GM10248 (cell line): ENCODE measurements at regions of chr1 and their contacts with region 1.

Region 1: GRCh38 chr1:32247983-32248889 is 1.2 kb downstream of the FAM167B start:
- DNase-seq: peak; percentile 87
- CTCF ChIP-seq: peak; percentile 94

Region 2: DNA sequence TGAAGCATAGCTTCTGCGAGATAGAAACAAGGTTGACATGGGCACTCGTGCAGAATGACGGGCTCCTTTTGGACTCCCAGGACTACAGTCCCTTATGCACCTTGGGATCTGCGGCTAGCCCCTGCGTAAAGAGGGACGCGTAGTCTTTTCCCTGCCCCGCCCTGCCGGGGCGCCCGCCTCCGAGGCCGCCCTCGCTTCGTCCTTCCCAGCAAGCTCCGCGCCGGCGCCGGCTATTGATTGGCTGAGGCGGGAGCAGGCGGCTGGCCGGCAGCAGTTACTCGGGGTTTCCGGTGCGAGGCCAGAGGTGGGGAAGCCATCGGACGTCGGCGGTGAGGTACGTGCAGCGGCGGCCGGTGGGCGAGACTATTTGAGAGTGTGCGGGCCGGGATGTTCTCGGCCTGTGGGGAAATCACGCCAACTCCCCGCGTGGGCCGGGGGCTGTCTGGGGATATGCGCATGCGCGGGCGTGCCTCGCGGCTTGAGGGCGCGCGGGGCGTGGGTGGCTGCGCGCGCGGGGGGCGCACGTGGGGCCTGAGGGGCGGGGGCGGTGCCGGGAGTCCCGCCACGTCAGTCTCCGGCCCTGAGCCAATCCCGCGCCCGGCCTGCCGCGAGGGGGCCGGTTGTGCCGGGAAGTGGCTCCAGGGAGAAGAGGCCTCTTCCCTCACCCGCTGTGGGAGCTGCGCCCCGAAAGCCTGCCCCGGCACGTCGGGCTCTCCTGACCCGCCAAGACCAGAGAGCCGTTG is 68.6 kb before region 1 on chr1 and contains the start of gene TXLNA:
- CTCF ChIA-PET with region 1: interaction called, 11 read pairs
- POLR2A ChIA-PET with region 1: no interaction called
- DNase-seq: peak; percentile 98
- CTCF ChIP-seq: peak; percentile 11

Region 3: GRCh38 chr1:32228771-32229170 is 19.5 kb before region 1 on chr1:
- CTCF ChIA-PET with region 1: interaction called, 104 read pairs
- POLR2A ChIA-PET with region 1: no interaction called
- DNase-seq: no peak
- CTCF ChIP-seq: no peak

Region 4: DNA sequence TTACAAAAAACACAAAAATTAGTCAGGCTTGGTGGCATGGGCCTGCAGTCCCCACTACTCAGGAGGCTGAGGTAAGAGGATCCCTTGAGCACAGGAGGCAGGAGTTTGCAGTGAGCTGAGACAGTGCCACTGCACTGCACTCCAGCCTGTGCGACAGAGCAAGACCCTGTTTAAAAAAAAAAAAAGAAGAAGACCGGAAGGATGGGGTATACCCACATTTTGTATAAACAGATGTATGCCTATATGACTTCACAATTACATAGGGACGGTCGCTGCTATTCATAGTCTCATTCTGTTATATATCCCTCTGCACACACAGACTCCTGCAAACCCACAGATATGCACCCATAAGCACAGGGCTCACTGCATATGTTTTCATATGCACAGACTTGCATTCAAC is 15.5 kb after region 1 on chr1:
- CTCF ChIA-PET with region 1: interaction called, 75 read pairs
- POLR2A ChIA-PET with region 1: no interaction called
- DNase-seq: peak; percentile 36
- CTCF ChIP-seq: no peak

Region 5: DNA sequence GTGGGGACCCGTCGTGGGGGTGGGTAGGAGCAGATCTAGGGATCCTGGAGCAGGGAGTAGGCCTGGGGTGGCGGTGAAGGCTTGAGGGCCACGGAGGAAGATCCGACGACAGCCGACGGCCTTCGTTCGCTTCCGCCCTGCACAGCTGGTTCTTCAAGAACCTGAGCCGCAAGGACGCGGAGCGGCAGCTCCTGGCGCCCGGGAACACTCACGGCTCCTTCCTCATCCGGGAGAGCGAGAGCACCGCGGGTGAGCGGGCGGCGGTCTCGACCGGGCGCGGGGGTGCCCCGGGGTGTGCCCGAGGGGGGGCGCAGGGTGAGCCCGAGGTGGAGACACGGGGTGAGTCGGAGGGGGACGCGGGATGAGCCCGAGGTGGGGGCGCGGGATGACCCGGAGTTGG is 27.2 kb after region 1 on chr1:
- CTCF ChIA-PET with region 1: interaction called, 12 read pairs
- POLR2A ChIA-PET with region 1: no interaction called
- DNase-seq: no peak
- CTCF ChIP-seq: no peak

Region 6: DNA sequence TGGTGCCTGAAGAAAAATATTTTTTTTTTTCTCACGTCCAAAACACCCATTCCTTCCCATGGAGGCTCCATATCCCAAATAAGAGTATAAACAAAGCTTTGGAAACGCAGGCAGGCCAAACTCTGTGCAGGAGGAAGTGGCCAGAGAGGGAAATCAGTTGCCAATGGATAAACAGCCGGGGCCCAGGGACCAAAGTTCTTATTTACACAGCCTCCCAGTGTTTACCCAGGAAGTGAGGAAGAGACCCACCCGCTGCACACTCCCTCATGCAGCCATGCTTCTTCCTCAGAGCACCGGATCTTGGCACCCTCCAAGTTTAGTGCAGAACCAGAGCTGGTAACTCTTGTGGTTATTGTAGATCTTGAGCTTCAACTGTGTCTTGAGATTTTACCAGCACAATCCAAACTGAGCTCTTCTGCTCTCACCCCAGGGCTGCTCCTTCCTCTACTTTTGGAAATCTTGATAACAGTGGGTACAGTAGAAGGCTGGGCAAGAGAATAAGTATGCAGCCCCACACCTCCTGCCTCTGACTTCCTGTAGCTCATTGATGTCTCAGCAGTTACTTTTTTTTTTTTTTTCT is 73.6 kb after region 1 on chr1:
- CTCF ChIA-PET with region 1: interaction called, 48 read pairs
- POLR2A ChIA-PET with region 1: interaction called, 3 read pairs
- DNase-seq: no peak
- CTCF ChIP-seq: no peak

Region 7: GRCh38 chr1:32386676-32387392 is 138.6 kb after region 1 on chr1:
- CTCF ChIA-PET with region 1: no interaction called
- POLR2A ChIA-PET with region 1: no interaction called
- DNase-seq: no peak
- CTCF ChIP-seq: no peak